Gastrocnemius medialis (tissue), 4 donors: ENCODE measurements at regions of chr11 and their contacts with region 1.

Region 1: GRCh38 chr11:67507864-67508485 is at the start of gene CDK2AP2:
- DNase-seq: peak; percentile 99
- ATAC-seq: peak; percentile 82 to 88
- H3K4me3 ChIP-seq: peak within 1 kb of the TSS; percentile 77 to 87 (median 85)
- H3K27ac ChIP-seq: peak within 1 kb of the TSS; percentile 94 to 99 (median 96)
- H3K4me1 ChIP-seq: peaks cover 26 to 35% of the 10 kb centered on the region in 2 donors
- H3K27me3 ChIP-seq: peaks cover 0 to 13% (median 0%) of the 10 kb centered on the region in 3 donors
- CTCF ChIP-seq: peak in 1 of 5 experiments; percentile 23
- POLR2A ChIP-seq: peak; percentile 97 to 99
- total RNA-seq, gene CDK2AP2: 24.1 to 47.5 (median 37.3) TPM

Region 2: GRCh38 chr11:67391304-67392132 is 116.5 kb before region 1 on chr11 and contains the start of gene RAD9A:
- in situ Hi-C with region 1: loop called in 3 of 4 experiments (anchors 10 kb)
- intact Hi-C with region 1: no loop called
- DNase-seq: peak; percentile 92 to 94
- ATAC-seq: peak; percentile 90 to 92
- H3K4me3 ChIP-seq: peak within 1 kb of the TSS; percentile 59 to 83 (median 74)
- H3K27ac ChIP-seq: peak within 1 kb of the TSS; percentile 79 to 89 (median 86)
- H3K4me1 ChIP-seq: peaks cover 5 to 15% of the 10 kb centered on the region in 2 donors
- H3K27me3 ChIP-seq: no peaks in the 10 kb centered on the region
- CTCF ChIP-seq: peak in 2 of 5 experiments; percentile 64 to 73
- POLR2A ChIP-seq: peak; percentile 34 to 66
- total RNA-seq, gene RAD9A: 5.2 to 14.7 (median 7.7) TPM

Region 3: DNA sequence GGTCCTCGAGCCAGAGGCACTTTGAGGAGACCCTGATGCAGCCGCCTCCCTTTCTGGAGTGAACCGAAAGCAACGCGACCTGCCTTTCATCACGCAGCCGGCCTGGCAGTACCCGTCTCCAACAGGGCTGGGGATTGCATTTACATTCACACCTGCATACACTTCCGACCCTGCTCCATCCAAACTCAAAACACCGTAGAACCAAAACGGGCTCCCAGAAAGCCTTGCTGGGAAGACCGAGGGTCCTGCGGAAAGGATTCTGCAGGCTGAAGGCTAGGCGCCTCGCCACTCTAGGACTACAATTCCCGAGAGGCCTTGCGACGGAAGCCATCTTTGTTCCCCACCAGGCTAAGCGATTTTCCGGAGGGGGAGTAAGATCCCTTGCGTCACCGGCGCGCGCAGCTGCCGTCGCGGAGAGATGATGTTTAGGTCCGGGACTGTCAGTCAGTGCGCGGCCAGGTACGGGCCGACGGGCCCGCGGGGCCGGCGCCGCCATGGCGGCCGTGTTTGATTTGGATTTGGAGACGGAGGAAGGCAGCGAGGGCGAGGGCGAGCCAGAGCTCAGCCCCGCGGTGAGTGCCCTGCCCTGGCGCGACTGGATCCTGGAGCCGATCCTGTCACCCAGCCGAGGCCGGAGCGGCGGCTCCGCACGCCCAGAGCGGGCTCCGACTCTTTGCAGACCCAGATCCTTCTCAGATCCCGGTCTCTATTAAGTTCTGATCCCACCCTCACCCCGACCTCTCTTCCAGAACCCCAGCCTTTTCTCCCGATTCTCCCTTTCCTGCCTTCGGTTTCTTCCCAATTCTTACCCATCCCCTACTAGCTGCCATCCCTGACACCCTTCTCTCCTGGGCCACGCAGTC is 79.7 kb before region 1 on chr11 and contains the start of gene RPS6KB2:
- in situ Hi-C with region 1: no loop called
- intact Hi-C with region 1: loop called (anchors 2 kb)
- DNase-seq: peak; percentile 96 to 99
- ATAC-seq: peak; percentile 96 to 99
- H3K4me3 ChIP-seq: peak within 1 kb of the TSS; percentile 92 to 100 (median 95)
- H3K27ac ChIP-seq: peak within 1 kb of the TSS; percentile 94 to 98 (median 96)
- H3K4me1 ChIP-seq: peaks cover 16 to 32% of the 10 kb centered on the region in 2 donors
- H3K27me3 ChIP-seq: no peaks in the 10 kb centered on the region
- CTCF ChIP-seq: no peak
- POLR2A ChIP-seq: peak; percentile 95 to 98
- total RNA-seq, gene RPS6KB2: 38.0 to 74.1 (median 39.4) TPM

Region 4: DNA sequence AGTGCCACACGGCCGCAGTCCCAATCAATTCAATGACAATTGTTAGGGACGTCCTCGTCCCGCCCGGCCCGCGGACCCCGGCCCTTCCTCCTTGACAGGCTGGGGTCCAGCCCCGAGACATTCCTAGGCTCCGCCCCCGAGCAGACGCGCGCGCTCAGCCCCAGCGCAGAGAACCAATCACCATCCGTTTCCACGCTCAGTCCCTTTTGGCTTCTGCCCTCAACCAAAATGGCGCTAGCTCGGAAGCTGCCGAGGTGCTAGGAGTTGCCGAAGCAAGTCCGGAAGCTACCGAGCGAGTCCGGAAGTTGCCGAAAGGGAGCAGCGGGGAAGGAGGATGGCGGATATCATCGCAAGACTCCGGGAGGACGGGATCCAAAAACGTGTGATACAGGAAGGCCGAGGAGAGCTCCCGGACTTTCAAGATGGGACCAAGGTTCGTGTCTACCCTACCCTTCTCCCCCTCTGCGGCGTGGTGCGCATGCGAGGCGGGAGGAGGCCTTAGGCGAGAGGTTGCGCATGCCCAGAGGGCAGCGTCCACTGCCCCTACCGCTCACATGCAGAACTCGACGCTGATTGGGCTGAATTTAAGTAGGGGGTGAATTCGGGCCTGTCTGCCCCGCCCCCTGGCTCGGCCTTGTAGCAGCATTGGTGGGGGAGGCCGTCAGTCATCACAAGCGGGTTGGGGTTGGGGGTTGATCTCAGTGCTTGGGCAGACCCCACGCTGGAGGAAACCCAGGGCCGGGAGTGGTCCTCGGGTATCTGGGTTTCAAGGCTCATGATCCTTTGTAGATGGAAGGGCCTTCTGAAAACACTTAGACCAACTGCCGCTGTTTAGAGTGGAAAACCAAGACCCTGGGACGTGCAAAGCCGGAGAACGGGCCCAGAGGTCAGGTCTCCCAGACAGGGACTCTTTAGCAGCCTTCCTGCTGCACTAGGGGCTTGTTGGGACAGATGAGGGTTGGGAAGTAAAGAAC is 24.9 kb before region 1 on chr11 and contains the start of gene AIP:
- in situ Hi-C with region 1: no loop called
- intact Hi-C with region 1: loop called (anchors 2 kb)
- DNase-seq: peak; percentile 96 to 98
- ATAC-seq: peak; percentile 100
- H3K4me3 ChIP-seq: peak within 1 kb of the TSS; percentile 64 to 70 (median 66)
- H3K27ac ChIP-seq: peak within 1 kb of the TSS; percentile 83 to 90 (median 86)
- H3K4me1 ChIP-seq: peaks cover 9 to 14% of the 10 kb centered on the region in 2 donors
- H3K27me3 ChIP-seq: no peaks in the 10 kb centered on the region
- CTCF ChIP-seq: peak in 2 of 5 experiments; percentile 24 to 25
- POLR2A ChIP-seq: peak; percentile 24 to 53
- total RNA-seq, gene AIP: 33.0 to 60.8 (median 48.8) TPM